ENCODE measurements at regions of chr1 and their contacts with region 1.

Region 1: DNA sequence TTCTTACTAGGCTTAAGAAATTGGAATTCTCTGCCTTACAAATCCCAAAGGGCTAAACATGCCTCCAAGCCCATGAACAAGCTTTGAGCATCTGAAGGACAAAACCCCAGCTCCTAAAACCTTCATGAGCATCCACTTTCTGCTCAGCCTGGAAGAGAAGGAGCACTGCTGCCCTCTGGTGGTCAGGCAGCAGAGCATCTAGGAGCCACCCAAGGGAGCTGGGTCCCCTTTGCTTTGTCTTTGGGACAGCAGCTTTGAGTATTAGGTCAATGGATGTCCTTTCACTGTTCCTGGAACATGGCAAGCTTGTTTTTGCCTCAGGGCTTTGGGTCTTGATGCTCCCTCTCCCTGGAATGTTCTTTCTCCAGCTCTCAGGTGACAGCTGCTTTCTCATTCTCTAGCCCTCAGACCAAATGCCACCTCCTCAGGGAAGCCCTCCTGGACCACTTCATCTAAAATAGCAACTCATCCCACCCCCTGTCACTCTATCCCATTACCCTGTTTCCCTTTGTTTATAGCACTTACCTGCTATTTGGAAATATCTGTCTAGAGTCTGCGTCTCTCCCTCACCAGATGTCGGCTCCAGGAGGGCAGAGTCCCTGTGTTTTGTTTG is 25.7 kb downstream of the RAB7B start:
- DNase-seq: peak; percentile 91
- H3K4me3 Mint-ChIP-seq: no peak overlapping the region
- H3K27ac Mint-ChIP-seq: no peak overlapping the region
- H3K4me1 Mint-ChIP-seq: peaks cover 28% of the 10 kb centered on the region
- H3K27me3 Mint-ChIP-seq: no peaks in the 10 kb centered on the region
- CTCF ChIP-seq: peak; percentile 98

Region 2: GRCh38 chr1:205791568-205792180 is 185.8 kb before region 1 on chr1:
- CTCF ChIA-PET with region 1: interaction called, 47 read pairs
- intact Hi-C with region 1: loop called (anchors 1 kb)
- DNase-seq: peak; percentile 81
- H3K4me3 Mint-ChIP-seq: no peak overlapping the region
- H3K27ac Mint-ChIP-seq: no peak overlapping the region
- H3K4me1 Mint-ChIP-seq: no peaks in the 10 kb centered on the region
- H3K27me3 Mint-ChIP-seq: no peaks in the 10 kb centered on the region
- CTCF ChIP-seq: peak; percentile 89

Region 3: DNA sequence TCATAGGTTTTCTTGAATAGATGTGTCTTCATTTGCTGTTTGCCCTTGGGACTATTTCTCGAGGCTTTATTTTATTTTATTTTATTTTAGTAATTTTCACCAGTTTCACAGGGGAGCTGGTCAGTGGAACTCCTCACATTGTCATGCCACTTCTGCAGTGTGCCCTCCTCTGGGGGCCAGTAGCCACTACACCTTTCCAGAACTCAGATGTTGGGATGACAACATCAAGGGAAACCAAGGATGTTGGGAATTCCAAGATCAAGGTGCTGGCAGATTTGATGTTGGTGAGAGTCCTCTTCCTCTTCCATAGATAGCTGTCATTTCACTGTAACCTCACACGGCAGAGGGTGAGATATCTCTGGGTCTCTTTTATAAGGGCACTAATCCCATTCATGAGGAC is 69.7 kb before region 1 on chr1:
- CTCF ChIA-PET with region 1: interaction called, 13 read pairs
- intact Hi-C with region 1: no loop called
- DNase-seq: peak; percentile 69
- H3K4me3 Mint-ChIP-seq: no peak overlapping the region
- H3K27ac Mint-ChIP-seq: no peak overlapping the region
- H3K4me1 Mint-ChIP-seq: no peaks in the 10 kb centered on the region
- H3K27me3 Mint-ChIP-seq: peaks cover 18% of the 10 kb centered on the region
- CTCF ChIP-seq: peak; percentile 90

Region 4: DNA sequence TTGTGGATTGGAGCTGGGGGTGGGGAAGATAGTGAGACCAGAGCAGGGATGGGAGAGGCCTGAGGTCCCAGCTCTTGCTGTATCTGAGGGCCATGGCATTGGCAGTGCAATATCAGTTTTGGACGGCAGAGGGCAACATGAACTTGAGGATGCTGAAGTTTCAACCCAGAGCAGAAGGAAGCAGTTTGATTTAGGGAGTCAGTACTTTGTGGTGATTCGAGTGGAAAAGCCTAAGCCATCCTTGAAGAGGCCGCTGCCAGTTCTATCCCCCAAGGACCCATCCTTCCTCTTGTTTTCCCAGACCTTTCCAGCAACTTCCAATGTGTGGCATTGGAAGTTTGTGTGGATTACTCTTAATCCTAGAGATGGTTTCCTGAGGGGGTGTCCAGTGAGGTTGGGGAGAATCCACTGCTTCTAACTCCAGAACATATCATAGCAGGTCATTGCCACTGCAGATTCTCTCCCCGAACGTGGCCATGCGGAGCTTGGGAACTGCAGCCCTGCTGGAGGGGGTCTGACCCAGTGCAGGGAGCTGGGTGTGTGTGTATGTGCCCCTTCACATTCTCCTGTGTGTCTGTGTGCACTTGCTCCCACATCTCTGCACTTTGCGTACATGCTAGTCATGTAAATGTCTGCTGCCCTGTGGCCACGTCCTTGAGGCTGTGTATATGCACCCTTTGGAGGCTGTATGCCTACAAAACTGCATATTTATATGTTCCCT is 58.3 kb before region 1 on chr1:
- CTCF ChIA-PET with region 1: interaction called, 294 read pairs
- intact Hi-C with region 1: loop called (anchors 1 kb)
- DNase-seq: peak; percentile 87
- H3K4me3 Mint-ChIP-seq: no peak overlapping the region
- H3K27ac Mint-ChIP-seq: no peak overlapping the region
- H3K4me1 Mint-ChIP-seq: peaks cover 8% of the 10 kb centered on the region
- H3K27me3 Mint-ChIP-seq: no peaks in the 10 kb centered on the region
- CTCF ChIP-seq: peak; percentile 97

Region 5: DNA sequence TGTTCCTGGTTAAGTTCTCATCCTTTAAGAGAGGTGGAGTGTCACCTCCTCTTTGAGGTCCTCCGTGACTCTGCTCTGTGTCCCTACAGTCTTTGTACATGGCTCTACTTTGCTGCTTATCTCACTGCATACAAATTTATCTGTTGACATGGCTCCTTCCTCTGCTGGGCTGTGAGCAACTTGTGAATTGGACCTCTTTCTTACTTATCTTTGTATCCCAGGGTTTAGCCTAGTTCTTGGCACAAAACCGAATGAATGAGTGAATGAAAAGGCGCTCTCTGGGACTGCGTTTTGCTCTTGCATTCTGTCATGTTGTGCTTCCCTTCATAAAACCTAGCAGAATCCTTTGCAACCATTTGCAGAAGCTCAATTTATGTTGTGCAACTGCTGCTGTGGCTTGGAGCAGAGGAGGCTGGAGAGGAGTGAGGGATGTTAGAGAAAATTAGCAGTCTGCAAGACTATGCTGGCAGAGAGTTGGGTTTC is 46.7 kb before region 1 on chr1:
- CTCF ChIA-PET with region 1: interaction called, 12 read pairs
- intact Hi-C with region 1: no loop called
- DNase-seq: no peak
- H3K4me3 Mint-ChIP-seq: no peak overlapping the region
- H3K27ac Mint-ChIP-seq: no peak overlapping the region
- H3K4me1 Mint-ChIP-seq: peaks cover 27% of the 10 kb centered on the region
- H3K27me3 Mint-ChIP-seq: no peaks in the 10 kb centered on the region
- CTCF ChIP-seq: no peak

Region 6: DNA sequence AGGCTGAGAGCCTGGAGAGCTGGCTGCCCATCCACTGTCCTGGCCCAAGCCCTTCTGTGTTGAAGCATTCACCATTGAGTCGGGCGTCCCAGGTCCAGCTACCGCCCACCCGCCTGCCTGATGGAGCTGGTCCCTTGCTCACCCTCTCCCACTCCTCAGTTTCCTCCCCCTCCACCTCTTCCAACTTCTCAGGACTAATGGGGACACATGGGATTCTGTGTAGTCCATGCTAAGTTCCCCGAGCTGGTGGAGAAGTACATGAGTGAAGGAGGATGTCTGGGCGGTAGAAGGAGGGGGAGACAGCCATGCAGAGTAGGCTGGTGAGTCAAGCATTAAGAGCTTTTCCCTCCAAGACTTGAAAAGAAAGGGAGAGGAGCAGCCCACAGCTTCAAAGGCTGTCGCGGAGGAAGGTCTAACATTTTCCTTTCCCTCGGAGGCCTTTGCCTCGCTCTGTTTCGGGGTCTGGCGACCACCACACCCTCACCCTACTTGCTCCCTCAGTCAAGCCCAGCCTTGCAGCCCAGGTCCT is 34.8 kb before region 1 on chr1:
- CTCF ChIA-PET with region 1: interaction called, 13 read pairs
- intact Hi-C with region 1: no loop called
- DNase-seq: no peak
- H3K4me3 Mint-ChIP-seq: no peak overlapping the region
- H3K27ac Mint-ChIP-seq: no peak overlapping the region
- H3K4me1 Mint-ChIP-seq: peaks cover 92% of the 10 kb centered on the region
- H3K27me3 Mint-ChIP-seq: peaks cover 10% of the 10 kb centered on the region
- CTCF ChIP-seq: no peak

Region 7: GRCh38 chr1:205961405-205961804 is 16.1 kb before region 1 on chr1:
- CTCF ChIA-PET with region 1: interaction called, 18 read pairs
- intact Hi-C with region 1: no loop called
- DNase-seq: peak; percentile 49
- H3K4me3 Mint-ChIP-seq: no peak overlapping the region
- H3K27ac Mint-ChIP-seq: peak overlapping the region; percentile 43
- H3K4me1 Mint-ChIP-seq: peaks cover 44% of the 10 kb centered on the region
- H3K27me3 Mint-ChIP-seq: peaks cover 11% of the 10 kb centered on the region
- CTCF ChIP-seq: no peak